Posterior vena cava (tissue), 2 donors: ENCODE measurements at regions of chr2 and their contacts with region 1.

Region 1: DNA sequence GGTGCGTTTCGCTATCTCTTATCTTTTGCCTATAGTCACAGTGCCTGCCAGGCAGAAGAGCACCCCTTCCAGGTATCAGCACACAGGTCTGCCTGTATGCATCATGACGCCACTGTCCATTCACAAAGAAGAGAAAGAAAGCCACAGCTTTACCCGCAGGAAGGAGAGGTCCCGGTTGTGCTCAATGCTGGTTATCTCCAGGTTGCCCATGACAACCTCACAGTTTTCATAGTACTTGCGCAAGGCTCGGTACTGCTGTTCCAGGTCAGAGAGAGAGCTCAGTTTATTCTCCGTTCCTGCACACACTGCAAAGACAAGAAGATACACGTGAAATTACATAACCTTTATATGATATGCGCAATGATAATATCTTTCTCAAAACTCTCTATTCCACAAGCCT is 414.0 kb downstream of the ERBB4 start:
- DNase-seq: no peak

Region 2: GRCh38 chr2:213065583-213066442 is 941.2 kb after region 1 on chr2:
- intact Hi-C with region 1: loop called in 1 of 2 experiments (anchors 10 kb)
- DNase-seq: no peak